ENCODE measurements at regions of chr1 and their contacts with region 1.

Region 1: DNA sequence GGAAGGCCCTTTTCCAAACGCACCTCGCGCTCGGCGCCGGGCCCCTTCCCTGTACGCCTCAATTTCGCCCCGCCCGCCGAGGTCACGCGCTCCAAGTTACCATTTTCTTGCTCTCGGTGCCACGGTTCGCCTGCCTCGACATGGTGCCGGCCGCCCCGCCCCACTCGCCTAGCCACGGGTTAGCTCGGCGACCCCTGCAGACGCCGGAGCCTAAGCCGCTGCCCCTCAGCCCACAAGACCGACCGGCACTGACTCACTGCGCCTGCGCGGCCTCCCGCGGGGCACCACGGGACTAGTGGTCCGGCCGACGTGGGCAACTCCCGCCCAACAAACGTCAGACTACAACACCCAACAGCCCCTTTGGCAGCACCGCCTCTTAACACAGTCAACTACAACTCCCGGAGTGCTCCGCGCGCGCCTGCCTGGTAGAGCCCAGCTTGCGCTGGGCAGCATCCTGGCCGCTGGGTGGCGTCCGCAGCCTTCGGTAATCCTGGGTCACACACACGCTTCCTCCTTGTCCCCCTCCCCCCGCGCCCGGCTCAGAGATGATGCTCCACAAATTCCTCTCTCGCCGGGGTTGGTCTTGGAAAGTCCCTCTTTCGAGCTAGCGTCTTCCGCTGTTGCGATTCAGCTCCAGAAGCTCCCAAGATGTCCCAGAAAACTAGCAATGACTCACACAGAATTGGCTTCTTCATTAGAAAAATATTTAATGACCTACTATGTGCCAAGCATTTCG is at the start of gene TRAPPC3:
- DNase-seq: peak; percentile 100
- H3K4me3 Mint-ChIP-seq: peak within 1 kb of the TSS; percentile 99
- H3K27ac Mint-ChIP-seq: peak within 1 kb of the TSS; percentile 88
- H3K4me1 Mint-ChIP-seq: peaks cover 67% of the 10 kb centered on the region
- H3K27me3 Mint-ChIP-seq: no peaks in the 10 kb centered on the region
- total RNA-seq, gene TRAPPC3: 35.9 to 37.6 TPM

Region 2: DNA sequence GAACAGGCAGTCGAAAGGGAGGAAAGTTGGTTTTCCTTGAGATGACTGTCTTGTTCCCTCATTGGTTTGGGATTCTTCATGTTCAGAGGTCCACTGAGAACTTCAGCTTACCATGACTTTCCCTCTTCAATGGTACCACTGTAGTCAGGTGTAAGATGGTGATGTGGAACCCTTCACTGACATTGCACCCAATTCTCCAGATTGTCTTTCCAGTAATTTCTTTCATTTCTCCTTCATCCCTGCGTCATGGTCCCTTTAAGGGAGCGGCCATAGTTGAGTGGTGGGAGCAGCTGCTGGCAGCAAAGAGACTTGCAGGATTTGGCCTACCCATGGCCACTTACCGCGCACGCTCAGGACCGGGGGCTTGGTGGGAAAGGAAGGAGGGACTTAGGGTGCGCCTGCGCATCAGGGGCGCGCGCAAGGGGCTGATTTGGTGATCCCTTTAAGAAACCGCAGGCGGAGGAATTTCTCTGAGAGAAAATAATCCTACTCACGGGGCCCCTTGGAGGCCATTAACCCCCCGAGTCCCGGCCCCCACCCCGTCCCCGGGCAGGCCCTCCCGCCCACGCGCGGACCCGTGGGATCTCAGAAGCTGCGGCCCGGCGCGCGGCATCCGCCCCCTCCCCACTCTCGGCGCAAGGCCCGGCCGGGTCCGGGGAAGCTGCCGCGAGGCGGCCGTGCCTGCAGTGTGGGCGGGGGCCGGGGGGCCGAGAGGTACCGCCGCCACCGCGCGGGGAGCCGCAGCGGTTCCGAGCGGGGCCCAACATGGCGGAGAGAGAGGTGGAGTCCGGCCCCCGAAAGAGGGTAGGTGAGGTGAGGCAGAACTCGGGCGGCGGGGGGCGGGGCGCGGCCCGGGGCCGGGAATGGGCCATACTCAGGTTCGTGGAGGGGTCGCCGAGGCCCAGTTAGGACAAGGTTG is 880.9 kb before region 1 on chr1 and contains the start of gene ZMYM4:
- CTCF ChIA-PET with region 1: no interaction called
- intact Hi-C with region 1: no loop called
- DNase-seq: peak; percentile 91
- H3K4me3 Mint-ChIP-seq: peak within 1 kb of the TSS; percentile 80
- H3K27ac Mint-ChIP-seq: peak within 1 kb of the TSS; percentile 82
- H3K4me1 Mint-ChIP-seq: peaks cover 22% of the 10 kb centered on the region
- H3K27me3 Mint-ChIP-seq: peaks cover 4% of the 10 kb centered on the region
- total RNA-seq, gene ZMYM4: 18.6 to 19.2 TPM

Region 3: DNA sequence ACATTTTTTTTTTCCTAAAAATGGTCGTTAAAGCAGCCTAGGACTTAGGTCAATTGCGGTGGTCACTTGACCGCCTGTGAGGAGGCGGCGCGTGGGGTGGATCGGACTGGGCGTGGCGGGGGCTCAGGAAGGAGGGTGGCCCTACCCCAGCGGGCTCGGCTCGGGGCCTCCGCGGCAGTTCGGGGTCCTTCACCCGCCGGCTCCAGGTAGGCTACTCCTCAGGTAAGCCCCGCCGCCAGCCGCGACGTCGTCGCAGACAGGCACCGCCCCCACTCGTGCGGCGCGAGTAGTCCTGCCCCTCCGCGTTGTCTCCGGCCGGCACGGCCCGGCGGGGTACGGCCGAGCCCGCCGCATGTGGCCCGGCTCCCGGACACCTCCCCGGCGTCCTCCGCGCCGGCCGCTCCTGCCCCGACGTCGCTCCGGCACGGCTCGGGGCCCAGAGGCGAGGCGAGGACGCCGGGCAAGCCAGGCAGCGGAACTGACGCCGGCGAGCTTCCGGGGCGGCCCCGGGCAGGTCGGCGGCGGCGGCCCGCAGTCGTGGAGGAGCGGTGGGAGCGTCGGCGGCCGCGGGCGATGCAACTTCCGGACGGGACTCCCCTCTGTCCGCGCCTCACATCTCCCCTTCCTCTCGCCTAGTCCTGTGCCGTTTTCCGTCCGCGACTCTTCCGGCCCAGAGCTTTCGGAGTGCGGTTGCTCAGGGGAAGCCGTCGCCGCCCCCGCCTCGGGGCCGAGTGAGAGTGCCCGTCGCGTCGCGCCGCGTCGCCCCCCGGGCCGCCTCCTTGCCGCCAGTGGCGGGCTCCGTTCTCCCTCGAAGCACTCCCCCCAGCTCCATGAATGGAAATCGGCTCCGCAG is 218.6 kb before region 1 on chr1 and contains the start of gene AGO3:
- CTCF ChIA-PET with region 1: interaction called, 3 read pairs
- intact Hi-C with region 1: loop called (anchors 2 kb)
- DNase-seq: peak; percentile 92
- H3K4me3 Mint-ChIP-seq: peak within 1 kb of the TSS; percentile 94
- H3K27ac Mint-ChIP-seq: peak within 1 kb of the TSS; percentile 90
- H3K4me1 Mint-ChIP-seq: peaks cover 35% of the 10 kb centered on the region
- H3K27me3 Mint-ChIP-seq: no peaks in the 10 kb centered on the region
- total RNA-seq, gene AGO3: 25.1 to 28.2 TPM

Region 4: DNA sequence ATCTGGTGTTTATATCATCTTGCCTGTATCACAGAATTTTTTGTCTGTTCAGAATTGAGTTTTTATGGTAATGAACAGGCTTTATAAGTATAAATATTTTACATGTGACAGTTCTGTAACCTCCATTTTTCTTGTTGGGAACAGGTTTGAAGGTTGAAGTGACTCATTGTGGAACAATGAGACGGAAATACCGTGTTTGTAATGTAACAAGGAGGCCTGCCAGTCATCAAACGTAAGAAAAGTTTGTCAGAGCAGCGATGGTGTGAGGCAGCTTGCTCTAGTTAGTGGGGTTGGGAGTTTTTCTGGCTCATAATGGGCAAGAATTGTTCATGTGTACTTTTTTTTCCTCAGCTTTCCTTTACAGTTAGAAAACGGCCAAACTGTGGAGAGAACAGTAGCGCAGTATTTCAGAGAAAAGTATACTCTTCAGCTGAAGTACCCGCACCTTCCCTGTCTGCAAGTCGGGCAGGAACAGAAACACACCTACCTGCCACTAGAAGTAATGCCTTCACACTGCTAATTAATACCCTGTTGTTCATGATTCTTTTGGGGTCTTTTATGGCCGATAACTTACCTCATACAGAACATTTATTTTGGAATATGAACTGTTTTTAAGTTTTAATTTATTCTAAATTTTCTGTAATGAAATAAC is 140.7 kb before region 1 on chr1:
- CTCF ChIA-PET with region 1: no interaction called
- intact Hi-C with region 1: no loop called
- DNase-seq: peak; percentile 14
- H3K4me3 Mint-ChIP-seq: no peak overlapping the region
- H3K27ac Mint-ChIP-seq: no peak overlapping the region
- H3K4me1 Mint-ChIP-seq: no peaks in the 10 kb centered on the region
- H3K27me3 Mint-ChIP-seq: no peaks in the 10 kb centered on the region

Region 5: DNA sequence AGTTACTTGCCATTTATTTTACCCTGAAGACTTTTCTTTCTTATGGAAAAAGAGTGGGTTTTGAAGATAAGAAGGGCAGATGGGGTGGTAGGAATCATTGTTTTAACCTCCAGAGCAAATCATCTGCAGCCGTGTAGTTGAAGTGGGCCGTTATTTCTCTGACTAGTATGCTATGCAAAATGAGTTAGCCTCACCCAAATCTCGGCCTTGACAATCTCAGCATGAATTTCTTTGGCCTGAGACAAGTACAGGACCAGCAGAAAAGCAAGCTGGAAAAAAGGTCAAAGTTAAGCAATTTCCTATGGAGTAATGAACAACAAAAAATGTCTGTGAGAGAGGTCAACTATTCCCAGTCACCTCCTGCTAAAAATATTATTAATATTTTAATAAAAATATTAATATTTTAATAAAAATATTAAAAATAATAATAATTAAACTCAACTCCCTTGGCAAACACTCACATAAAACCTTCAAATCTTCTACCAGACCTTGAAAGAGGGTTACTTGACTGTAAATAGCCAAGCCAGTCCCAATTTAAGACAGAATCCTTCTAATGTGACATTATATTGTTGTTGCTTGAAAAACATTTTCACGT is 72.3 kb before region 1 on chr1:
- CTCF ChIA-PET with region 1: no interaction called
- intact Hi-C with region 1: no loop called
- DNase-seq: no peak
- H3K4me3 Mint-ChIP-seq: no peak overlapping the region
- H3K27ac Mint-ChIP-seq: no peak overlapping the region
- H3K4me1 Mint-ChIP-seq: peaks cover 3% of the 10 kb centered on the region
- H3K27me3 Mint-ChIP-seq: peaks cover 5% of the 10 kb centered on the region

Region 6: DNA sequence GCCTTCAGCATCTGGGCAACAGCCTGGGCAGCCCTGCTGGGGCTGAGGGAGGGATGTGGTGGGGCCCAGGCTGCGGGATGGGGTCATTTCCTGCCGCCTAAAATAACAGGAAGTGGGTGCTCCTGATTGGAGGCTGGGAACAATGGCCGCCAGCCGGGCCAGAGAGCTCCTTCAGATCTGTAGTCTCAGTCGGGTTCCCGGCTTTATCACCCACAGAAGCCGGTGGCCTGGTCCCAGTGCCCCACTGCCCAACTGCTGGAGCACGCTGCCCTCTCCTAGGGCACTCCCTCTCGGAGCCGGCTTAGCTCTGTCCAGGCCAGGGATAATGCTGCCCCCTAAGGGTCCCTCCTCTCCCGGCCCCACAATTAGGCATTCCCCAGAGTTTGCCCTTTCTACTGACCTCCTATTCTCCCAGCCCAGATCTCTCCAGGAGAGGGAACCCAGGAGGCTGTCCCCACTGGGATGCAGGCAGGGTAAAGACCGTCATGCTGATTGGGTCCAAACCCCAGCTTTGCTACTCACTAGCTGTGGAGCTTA is 11.6 kb after region 1 on chr1:
- CTCF ChIA-PET with region 1: interaction called, 75 read pairs
- intact Hi-C with region 1: loop called (anchors 1 kb)
- DNase-seq: peak; percentile 89
- H3K4me3 Mint-ChIP-seq: peak overlapping the region; percentile 83
- H3K27ac Mint-ChIP-seq: peak overlapping the region; percentile 93
- H3K4me1 Mint-ChIP-seq: peaks cover 57% of the 10 kb centered on the region
- H3K27me3 Mint-ChIP-seq: no peaks in the 10 kb centered on the region

Region 7: GRCh38 chr1:36285448-36286101 is 136.2 kb after region 1 on chr1:
- CTCF ChIA-PET with region 1: interaction called, 33 read pairs
- intact Hi-C with region 1: loop called (anchors 1 kb)
- DNase-seq: peak; percentile 79
- H3K4me3 Mint-ChIP-seq: no peak overlapping the region
- H3K27ac Mint-ChIP-seq: peak overlapping the region; percentile 73
- H3K4me1 Mint-ChIP-seq: peaks cover 33% of the 10 kb centered on the region
- H3K27me3 Mint-ChIP-seq: no peaks in the 10 kb centered on the region

Region 8: DNA sequence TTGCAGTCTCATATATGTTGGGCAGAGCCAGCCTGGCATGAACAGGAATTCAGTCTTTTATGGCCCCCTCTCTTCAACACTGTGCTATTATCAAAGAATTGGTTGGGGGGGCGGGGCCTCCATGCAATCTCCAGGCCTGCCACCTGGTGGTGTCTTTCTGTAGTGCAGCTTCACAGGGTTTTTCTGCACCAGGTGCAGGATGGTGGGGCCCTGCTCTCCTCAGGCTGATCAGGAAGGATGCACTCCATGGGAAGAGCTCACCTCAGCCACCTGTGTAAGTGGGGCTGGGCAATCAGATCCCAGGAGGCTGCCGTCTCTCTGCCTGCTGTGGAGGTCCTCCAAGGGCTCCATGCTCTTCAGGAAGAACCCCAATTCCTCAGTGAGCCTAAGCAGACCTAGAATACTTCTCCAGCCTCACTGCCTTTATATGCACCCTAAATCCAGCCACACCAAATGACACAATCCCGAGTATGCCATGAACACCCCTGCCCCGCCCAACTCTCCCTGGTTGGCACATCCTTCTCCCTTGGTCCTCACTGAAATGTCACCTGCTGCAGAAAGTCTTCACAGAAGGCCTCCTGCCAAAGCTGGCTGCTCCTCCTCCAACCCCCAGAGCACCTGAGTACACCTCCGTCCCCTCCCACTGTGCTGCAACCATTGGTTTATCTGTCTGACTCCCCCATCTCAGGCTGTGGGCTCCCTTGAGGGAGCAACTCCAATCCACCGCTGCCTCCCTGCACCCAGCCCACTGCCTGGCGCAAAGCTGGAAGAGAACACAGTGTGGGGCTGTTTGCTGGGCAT is 219.9 kb after region 1 on chr1:
- CTCF ChIA-PET with region 1: interaction called, 29 read pairs
- intact Hi-C with region 1: loop called (anchors 1 kb)
- DNase-seq: peak; percentile 93
- H3K4me3 Mint-ChIP-seq: no peak overlapping the region
- H3K27ac Mint-ChIP-seq: peak overlapping the region; percentile 65
- H3K4me1 Mint-ChIP-seq: peaks cover 67% of the 10 kb centered on the region
- H3K27me3 Mint-ChIP-seq: no peaks in the 10 kb centered on the region

Region 9: DNA sequence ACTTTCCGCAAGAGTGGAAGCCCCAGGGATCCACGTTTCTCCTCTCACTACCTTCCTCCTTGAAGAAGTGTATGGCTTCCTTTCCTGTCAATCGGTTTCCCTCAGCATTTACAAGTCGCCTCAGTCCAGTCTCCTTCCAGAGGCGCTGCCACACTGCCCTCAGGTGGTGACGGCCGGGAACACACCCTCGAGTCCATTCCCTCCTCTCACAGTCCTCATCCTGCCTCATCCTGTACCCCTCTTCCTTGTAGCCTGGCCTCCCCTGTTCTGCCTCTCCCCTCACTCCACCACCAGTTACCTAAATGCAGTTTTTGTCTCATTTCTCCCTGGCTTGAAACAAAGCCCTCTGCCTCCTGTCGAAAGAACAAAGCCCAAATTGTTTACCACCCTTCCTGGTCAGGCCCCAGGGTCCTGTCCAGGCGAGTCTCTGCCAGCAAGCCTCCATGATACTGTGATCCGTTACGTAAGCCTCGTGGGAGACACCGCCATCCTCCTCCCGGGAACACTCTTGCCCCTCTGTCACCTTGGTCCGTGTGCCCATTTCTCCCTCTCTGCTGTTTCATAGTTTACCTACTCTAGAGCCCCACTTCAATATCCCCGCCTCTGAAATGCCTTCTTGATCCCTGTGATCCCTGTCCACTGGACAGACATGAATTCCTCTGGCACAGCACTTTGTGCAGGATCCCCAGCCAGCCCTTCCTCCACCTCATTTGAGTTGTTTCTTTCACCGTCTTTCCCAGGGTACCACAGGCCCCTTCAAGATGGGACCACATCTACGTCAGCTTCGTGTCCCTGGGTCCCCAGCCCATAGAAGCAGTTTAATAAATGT is 271.6 kb after region 1 on chr1:
- CTCF ChIA-PET with region 1: interaction called, 13 read pairs
- intact Hi-C with region 1: loop called (anchors 1 kb)
- DNase-seq: peak; percentile 97
- H3K4me3 Mint-ChIP-seq: peak overlapping the region; percentile 45
- H3K27ac Mint-ChIP-seq: peak overlapping the region; percentile 93
- H3K4me1 Mint-ChIP-seq: peaks cover 20% of the 10 kb centered on the region
- H3K27me3 Mint-ChIP-seq: no peaks in the 10 kb centered on the region

Measured in activated naive CD4-positive, alpha-beta T cell treated with anti-CD3 and anti-CD28 coated beads for 36 hours (primary cell).